ENCODE measurements at regions of chr21 and their contacts with region 1.

Region 1: DNA sequence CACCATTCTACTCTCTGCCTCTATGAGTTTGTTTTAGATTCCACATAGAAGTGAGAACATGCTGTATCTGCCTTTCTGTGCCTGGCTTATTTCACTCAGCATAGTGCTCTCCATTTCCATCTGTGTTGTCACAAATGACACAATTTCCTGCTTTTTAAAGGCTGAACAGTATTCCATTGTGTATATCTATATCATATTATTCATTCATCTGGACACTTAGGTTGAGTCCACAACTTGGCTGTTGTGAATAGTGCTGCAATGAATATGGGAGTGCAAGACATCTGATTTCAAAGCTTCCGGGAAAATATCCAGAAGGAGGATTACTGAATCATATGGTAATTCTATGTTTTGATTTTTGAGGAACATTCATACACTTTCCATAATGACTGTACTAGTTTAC is 20.1 kb upstream of the DONSON start:
- DNase-seq: no peak
- ATAC-seq: peak; percentile 51
- H3K4me3 ChIP-seq: no peak overlapping the region
- H3K27ac ChIP-seq: no peak overlapping the region
- H3K4me1 ChIP-seq: peaks cover 5% of the 10 kb centered on the region
- H3K27me3 ChIP-seq: no peaks in the 10 kb centered on the region
- CTCF ChIP-seq: no peak

Region 2: DNA sequence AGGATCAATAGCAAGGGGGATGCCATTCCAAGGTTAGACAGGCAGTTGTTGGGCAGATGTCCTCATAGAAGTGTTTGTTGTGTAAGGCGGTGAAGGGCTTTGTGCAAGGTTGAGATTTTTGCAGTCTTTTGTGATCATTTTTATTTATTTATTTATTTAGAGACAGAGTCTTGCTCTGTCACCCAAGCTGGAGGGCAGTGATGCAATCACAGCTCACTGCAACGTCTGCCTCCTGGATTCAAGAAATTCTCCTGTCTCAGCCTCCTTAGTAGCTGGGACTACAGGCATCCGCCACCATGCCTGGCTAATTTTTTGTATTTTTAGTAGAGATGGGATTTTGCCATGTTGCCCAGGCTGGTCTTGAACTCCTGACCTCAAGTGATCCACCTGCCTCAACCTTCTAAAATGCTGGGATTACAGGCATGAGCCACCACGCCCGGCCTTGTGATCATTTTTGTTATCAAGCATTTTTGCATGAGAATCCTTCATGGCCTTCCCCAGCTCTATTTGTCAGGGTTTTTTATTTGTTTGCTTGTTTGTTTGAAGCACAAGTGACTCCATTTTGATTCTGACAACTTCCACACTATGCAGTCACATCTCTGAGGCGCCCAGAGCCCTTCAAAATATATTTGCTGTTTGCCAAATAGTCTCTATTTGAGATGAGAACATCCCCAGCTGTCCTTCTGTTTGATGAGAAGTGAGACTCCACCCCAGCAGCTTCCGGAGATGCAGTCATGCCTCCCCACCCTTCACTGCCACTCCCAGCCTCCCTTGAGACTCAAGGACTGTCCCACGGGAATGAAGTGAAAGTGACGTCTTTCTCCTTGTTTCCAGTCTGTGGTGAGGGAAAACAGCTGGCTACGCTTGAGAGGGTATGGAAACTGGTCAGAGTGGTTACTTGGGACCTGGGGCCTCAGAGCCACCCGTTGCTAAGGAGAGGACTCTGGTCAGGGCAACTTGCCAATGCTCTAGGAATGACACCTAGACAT is 166.8 kb before region 1 on chr21:
- CTCF ChIA-PET with region 1: interaction called, 4 read pairs
- POLR2A ChIA-PET with region 1: interaction called, 11 read pairs
- intact Hi-C with region 1: no loop called
- DNase-seq: peak; percentile 91
- ATAC-seq: peak; percentile 92
- H3K4me3 ChIP-seq: no peak overlapping the region
- H3K27ac ChIP-seq: peak overlapping the region; percentile 93
- H3K4me1 ChIP-seq: peaks cover 21% of the 10 kb centered on the region
- H3K27me3 ChIP-seq: no peaks in the 10 kb centered on the region
- CTCF ChIP-seq: no peak

Region 3: GRCh38 chr21:33514229-33514628 is 94.3 kb before region 1 on chr21:
- CTCF ChIA-PET with region 1: no interaction called
- POLR2A ChIA-PET with region 1: no interaction called
- intact Hi-C with region 1: no loop called
- DNase-seq: no peak
- ATAC-seq: no peak
- H3K4me3 ChIP-seq: no peak overlapping the region
- H3K27ac ChIP-seq: no peak overlapping the region
- H3K4me1 ChIP-seq: no peaks in the 10 kb centered on the region
- H3K27me3 ChIP-seq: no peaks in the 10 kb centered on the region
- CTCF ChIP-seq: no peak

Region 4: GRCh38 chr21:33542640-33543504 is 65.7 kb before region 1 on chr21 and contains the start of gene SON:
- CTCF ChIA-PET with region 1: interaction called, 3 read pairs
- POLR2A ChIA-PET with region 1: no interaction called
- intact Hi-C with region 1: loop called (anchors 1 kb)
- DNase-seq: peak; percentile 99
- ATAC-seq: peak; percentile 95
- H3K4me3 ChIP-seq: peak within 1 kb of the TSS; percentile 94
- H3K27ac ChIP-seq: peak within 1 kb of the TSS; percentile 98
- H3K4me1 ChIP-seq: peaks cover 22% of the 10 kb centered on the region
- H3K27me3 ChIP-seq: no peaks in the 10 kb centered on the region
- CTCF ChIP-seq: no peak
- total RNA-seq, gene SON: 180 and 373 TPM in 2 replicates

Region 5: DNA sequence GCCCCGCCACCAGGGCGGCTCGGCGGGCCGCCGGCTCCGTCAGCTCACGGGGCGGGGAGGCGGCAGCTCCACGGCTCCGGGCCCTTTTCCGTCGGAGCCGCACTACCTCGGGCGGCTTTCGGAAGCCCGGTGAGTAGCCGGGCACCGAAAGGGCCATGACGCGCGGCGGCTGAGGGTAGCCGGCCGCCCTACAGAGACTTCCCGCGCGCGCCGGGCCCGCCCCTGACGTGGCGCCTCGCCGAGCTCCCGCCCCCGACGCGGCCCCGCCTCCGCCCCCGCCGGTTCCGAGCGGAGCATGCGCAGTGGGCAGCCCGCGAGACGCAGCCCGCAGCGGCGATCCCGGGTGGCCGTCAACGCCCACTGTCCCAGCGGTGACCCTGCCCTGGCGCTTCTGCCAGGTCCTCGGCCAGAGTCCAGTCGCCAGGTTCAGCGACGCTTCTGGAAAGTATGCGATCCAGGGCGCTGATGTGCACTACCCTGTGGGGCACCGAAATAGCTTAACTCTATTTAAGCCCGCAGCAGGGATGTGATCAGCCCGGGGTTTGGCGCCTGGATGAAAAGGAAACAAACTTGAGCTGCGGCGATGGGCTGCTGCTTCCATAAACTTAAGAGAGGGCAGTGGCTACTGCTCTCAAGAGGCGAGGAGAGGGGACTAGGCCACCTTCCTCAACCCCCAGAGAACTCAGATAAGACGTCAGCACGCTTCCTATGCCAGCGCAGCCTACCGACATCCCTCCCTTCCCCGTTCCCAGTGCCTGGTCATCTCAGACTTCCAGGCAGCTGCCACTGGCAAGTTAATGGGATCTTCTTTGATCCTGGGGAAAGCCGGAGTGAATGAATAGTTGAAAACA is 19.8 kb before region 1 on chr21 and contains the start of gene DONSON:
- CTCF ChIA-PET with region 1: interaction called, 36 read pairs
- POLR2A ChIA-PET with region 1: interaction called, 24 read pairs
- intact Hi-C with region 1: loop called (anchors 2 kb)
- DNase-seq: peak; percentile 87
- ATAC-seq: peak; percentile 85
- H3K4me3 ChIP-seq: peak within 1 kb of the TSS; percentile 98
- H3K27ac ChIP-seq: peak within 1 kb of the TSS; percentile 51
- H3K4me1 ChIP-seq: peaks cover 25% of the 10 kb centered on the region
- H3K27me3 ChIP-seq: no peaks in the 10 kb centered on the region
- CTCF ChIP-seq: no peak
- total RNA-seq, gene DONSON: 29.2 and 41.9 TPM in 2 replicates

Region 6: DNA sequence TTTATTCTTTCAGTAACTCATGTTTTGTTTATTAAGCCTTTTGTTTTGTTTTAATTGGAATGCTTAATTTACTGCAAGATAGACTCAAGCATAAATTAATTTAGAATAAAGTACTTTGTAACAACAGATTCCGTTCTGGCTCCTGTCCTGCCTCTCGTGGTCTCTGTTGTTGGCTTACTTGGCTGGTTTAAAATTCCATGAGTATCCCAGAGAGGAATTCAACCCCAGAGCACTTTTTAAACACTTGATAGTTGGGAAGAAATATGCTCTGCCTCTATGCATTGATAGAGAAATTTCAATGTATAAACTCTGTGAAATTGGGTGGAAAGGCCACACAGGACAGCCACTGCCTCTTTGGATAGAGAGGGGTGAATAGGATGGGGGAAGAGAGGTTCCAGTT is 217.4 kb after region 1 on chr21:
- CTCF ChIA-PET with region 1: no interaction called
- POLR2A ChIA-PET with region 1: interaction called, 14 read pairs
- intact Hi-C with region 1: no loop called
- DNase-seq: no peak
- ATAC-seq: no peak
- H3K4me3 ChIP-seq: no peak overlapping the region
- H3K27ac ChIP-seq: no peak overlapping the region
- H3K4me1 ChIP-seq: no peaks in the 10 kb centered on the region
- H3K27me3 ChIP-seq: no peaks in the 10 kb centered on the region
- CTCF ChIP-seq: no peak